A549 (cell line): ENCODE measurements at regions of chr9 and their contacts with region 1.

Region 1: DNA sequence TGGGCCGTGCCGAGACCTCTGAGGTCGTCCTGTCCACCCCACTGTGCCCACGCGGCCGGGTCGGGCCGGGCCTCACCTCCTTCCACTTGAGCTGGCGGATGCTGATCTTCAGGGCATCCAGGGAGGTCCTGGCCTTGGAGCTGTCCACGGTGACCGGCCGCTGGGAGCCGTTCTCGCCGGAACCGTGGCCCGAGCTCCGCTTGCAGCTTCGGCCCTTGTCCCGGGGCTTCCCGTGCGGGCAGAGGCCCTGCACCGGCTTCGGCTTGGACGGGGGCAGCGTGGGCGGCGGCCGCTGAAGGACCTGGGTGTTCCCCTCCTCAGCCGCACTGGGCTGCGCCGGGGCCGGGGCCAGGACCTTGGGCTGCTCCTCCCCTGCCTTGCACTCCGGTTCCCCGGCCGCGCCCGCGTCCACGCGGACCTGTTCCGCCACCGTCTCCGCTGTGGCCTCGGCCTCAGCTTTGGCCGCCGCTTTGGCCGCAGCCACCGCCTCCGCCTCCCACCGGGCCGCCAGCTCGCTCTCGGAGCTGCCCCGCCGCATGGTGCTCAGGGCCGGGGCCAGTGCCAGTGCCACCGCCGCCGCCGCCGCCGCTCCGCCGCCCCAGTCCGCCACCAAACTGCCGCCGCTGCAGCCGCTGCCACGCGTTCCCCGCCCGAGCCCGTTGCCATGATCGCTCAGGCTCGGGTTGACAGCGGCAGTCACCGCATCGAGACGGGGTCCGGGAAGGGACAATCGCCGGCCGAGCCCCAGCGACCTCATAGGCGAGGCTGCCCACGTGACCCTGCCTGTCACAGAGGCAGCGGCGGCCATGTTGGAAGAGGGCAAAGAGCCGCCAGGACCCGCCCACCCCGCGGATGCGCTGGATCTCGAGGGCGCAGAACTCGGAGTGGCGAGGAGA is at the start of gene TTLL11:
- DNase-seq: peak; percentile 91 to 93
- ATAC-seq: peak; percentile 92 to 96
- H3K4me3 ChIP-seq: peak within 1 kb of the TSS; percentile 84
- H3K27ac ChIP-seq: peak within 1 kb of the TSS; percentile 67 to 85
- H3K4me1 ChIP-seq: peaks cover 10% of the 10 kb centered on the region; the same call in 2 of the 3 replicates
- CTCF ChIP-seq: no peak
- EP300 ChIP-seq: no peak
- POLR2A ChIP-seq: peak; percentile 27
- RAD21 ChIP-seq: no peak
- polyA plus RNA-seq, gene TTLL11: 2.6 and 3.0 TPM in 2 replicates

Region 2: DNA sequence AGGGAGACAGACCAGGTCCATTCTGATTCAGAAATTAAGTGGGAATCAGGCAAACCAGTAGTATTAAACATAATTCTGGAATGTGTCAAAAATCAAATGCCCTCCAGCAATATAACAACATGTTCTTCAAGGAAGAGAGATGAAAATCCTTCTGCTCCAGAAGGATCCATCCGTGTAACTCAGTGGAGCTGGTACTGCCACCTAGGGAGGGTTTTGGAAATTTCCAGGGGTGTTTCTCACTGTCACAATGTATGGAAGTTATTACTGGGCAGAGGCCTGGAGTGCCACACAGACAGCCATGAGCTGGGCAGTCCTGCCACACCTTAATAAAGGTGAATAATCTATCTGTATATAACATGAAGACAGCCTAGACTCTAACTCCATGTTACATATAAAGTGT is 87.3 kb before region 1 on chr9:
- CTCF ChIA-PET with region 1: no interaction called
- POLR2A ChIA-PET with region 1: no interaction called
- DNase-seq: peak; percentile 48 to 69
- ATAC-seq: peak; percentile 96 to 98
- H3K4me3 ChIP-seq: no peak overlapping the region
- H3K27ac ChIP-seq: no peak overlapping the region
- H3K4me1 ChIP-seq: peaks cover 19% of the 10 kb centered on the region
- CTCF ChIP-seq: peak; percentile 57
- EP300 ChIP-seq: no peak
- POLR2A ChIP-seq: no peak
- RAD21 ChIP-seq: peak; percentile 35 to 52; a peak in 4 of 5 replicates

Region 3: DNA sequence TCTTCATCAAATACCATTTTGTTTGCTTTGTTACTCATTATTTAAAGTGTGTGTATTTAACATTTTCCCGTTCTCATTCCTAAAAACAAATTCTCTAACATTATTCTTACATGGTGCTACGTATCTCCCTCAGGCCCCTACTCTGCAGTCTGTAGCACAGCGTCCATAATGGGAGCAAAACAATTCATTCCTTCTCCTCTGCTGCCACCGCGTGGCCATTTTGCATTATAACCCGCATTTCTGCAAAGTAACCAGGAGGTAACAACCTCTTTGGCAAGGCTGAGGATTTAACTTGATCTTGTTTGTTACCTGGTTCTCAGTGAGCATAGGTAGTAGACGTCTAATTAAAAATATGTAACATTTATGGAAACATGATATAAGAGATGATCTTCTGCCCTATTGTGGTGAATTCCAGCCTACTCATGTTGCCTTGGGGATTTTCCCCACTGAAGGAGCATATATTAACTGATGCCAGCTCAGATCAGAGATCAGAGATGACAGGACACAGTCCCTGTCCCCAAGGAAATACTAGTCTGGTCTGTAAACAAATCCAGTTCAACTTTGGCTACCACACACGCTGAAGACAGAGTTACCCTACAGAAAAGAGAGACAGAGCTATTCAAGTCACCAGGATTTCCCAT is 717.6 kb after region 1 on chr9:
- CTCF ChIA-PET with region 1: interaction called, 53 read pairs
- POLR2A ChIA-PET with region 1: no interaction called
- DNase-seq: peak; percentile 78 to 82
- ATAC-seq: peak; percentile 91 to 97
- H3K4me3 ChIP-seq: no peak overlapping the region
- H3K27ac ChIP-seq: no peak overlapping the region
- H3K4me1 ChIP-seq: 0 out of 3 replicates have a peak, but pooled peaks cover 4% of the 10 kb centered on the region
- CTCF ChIP-seq: peak; percentile 91
- EP300 ChIP-seq: no peak
- POLR2A ChIP-seq: no peak
- RAD21 ChIP-seq: peak; percentile 96 to 98